MCF 10A (cell line): ENCODE measurements at regions of chr6 and their contacts with region 1.

Region 1: GRCh38 chr6:27295301-27296081 is 16.6 kb downstream of the POM121L2 start:
- DNase-seq: peak; percentile 87
- H3K4me3 Mint-ChIP-seq: peak overlapping the region; percentile 83
- H3K27ac Mint-ChIP-seq: peak overlapping the region; percentile 29
- H3K4me1 Mint-ChIP-seq: peaks cover 32% of the 10 kb centered on the region
- H3K27me3 Mint-ChIP-seq: no peaks in the 10 kb centered on the region
- CTCF ChIP-seq: no peak

Region 2: GRCh38 chr6:27132532-27133280 is 162.8 kb before region 1 on chr6:
- CTCF ChIA-PET with region 1: no interaction called
- POLR2A ChIA-PET with region 1: no interaction called
- intact Hi-C with region 1: no loop called
- DNase-seq: peak; percentile 99
- H3K4me3 Mint-ChIP-seq: no peak overlapping the region
- H3K27ac Mint-ChIP-seq: no peak overlapping the region
- H3K4me1 Mint-ChIP-seq: peaks cover 11% of the 10 kb centered on the region
- H3K27me3 Mint-ChIP-seq: no peaks in the 10 kb centered on the region
- CTCF ChIP-seq: no peak

Region 3: GRCh38 chr6:27177485-27178406 is 117.7 kb before region 1 on chr6:
- CTCF ChIA-PET with region 1: no interaction called
- POLR2A ChIA-PET with region 1: interaction called, 3 read pairs
- intact Hi-C with region 1: loop called (anchors 5 kb)
- DNase-seq: peak; percentile 92
- H3K4me3 Mint-ChIP-seq: peak overlapping the region; percentile 87
- H3K27ac Mint-ChIP-seq: peak overlapping the region; percentile 92
- H3K4me1 Mint-ChIP-seq: no peaks in the 10 kb centered on the region
- H3K27me3 Mint-ChIP-seq: no peaks in the 10 kb centered on the region
- CTCF ChIP-seq: peak; percentile 36

Region 4: GRCh38 chr6:27213544-27214125 is 81.9 kb before region 1 on chr6:
- CTCF ChIA-PET with region 1: no interaction called
- POLR2A ChIA-PET with region 1: interaction called, 4 read pairs
- intact Hi-C with region 1: loop called (anchors 2 kb)
- DNase-seq: peak; percentile 68
- H3K4me3 Mint-ChIP-seq: peak overlapping the region; percentile 88
- H3K27ac Mint-ChIP-seq: no peak overlapping the region
- H3K4me1 Mint-ChIP-seq: no peaks in the 10 kb centered on the region
- H3K27me3 Mint-ChIP-seq: no peaks in the 10 kb centered on the region
- CTCF ChIP-seq: no peak

Region 5: GRCh38 chr6:27237089-27237803 is 58.2 kb before region 1 on chr6:
- CTCF ChIA-PET with region 1: interaction called, 3 read pairs
- POLR2A ChIA-PET with region 1: interaction called, 24 read pairs
- intact Hi-C with region 1: loop called (anchors 5 kb)
- DNase-seq: peak; percentile 52
- H3K4me3 Mint-ChIP-seq: peak overlapping the region; percentile 75
- H3K27ac Mint-ChIP-seq: peak overlapping the region; percentile 51
- H3K4me1 Mint-ChIP-seq: peaks cover 13% of the 10 kb centered on the region
- H3K27me3 Mint-ChIP-seq: no peaks in the 10 kb centered on the region
- CTCF ChIP-seq: no peak

Region 6: GRCh38 chr6:27251606-27252251 is 43.8 kb before region 1 on chr6:
- CTCF ChIA-PET with region 1: interaction called, 7 read pairs
- POLR2A ChIA-PET with region 1: interaction called, 29 read pairs
- intact Hi-C with region 1: loop called (anchors 2 kb)
- DNase-seq: peak; percentile 90
- H3K4me3 Mint-ChIP-seq: peak overlapping the region; percentile 99
- H3K27ac Mint-ChIP-seq: peak overlapping the region; percentile 84
- H3K4me1 Mint-ChIP-seq: no peaks in the 10 kb centered on the region
- H3K27me3 Mint-ChIP-seq: no peaks in the 10 kb centered on the region
- CTCF ChIP-seq: peak; percentile 57

Region 7: GRCh38 chr6:27332692-27333641 is 37.5 kb after region 1 on chr6:
- CTCF ChIA-PET with region 1: no interaction called
- POLR2A ChIA-PET with region 1: interaction called, 14 read pairs
- intact Hi-C with region 1: no loop called
- DNase-seq: peak; percentile 84
- H3K4me3 Mint-ChIP-seq: peak overlapping the region; percentile 78
- H3K27ac Mint-ChIP-seq: peak overlapping the region; percentile 27
- H3K4me1 Mint-ChIP-seq: peaks cover 18% of the 10 kb centered on the region
- H3K27me3 Mint-ChIP-seq: no peaks in the 10 kb centered on the region
- CTCF ChIP-seq: no peak

Region 8: GRCh38 chr6:27672113-27672799 is 376.8 kb after region 1 on chr6:
- CTCF ChIA-PET with region 1: interaction called, 4 read pairs
- POLR2A ChIA-PET with region 1: interaction called, 3 read pairs
- intact Hi-C with region 1: loop called (anchors 5 kb)
- DNase-seq: peak; percentile 84
- H3K4me3 Mint-ChIP-seq: peak overlapping the region; percentile 76
- H3K27ac Mint-ChIP-seq: peak overlapping the region; percentile 77
- H3K4me1 Mint-ChIP-seq: peaks cover 12% of the 10 kb centered on the region
- H3K27me3 Mint-ChIP-seq: no peaks in the 10 kb centered on the region
- CTCF ChIP-seq: no peak